B cell (primary cell): ENCODE measurements at regions of chr5 and their contacts with region 1.

Region 1: DNA sequence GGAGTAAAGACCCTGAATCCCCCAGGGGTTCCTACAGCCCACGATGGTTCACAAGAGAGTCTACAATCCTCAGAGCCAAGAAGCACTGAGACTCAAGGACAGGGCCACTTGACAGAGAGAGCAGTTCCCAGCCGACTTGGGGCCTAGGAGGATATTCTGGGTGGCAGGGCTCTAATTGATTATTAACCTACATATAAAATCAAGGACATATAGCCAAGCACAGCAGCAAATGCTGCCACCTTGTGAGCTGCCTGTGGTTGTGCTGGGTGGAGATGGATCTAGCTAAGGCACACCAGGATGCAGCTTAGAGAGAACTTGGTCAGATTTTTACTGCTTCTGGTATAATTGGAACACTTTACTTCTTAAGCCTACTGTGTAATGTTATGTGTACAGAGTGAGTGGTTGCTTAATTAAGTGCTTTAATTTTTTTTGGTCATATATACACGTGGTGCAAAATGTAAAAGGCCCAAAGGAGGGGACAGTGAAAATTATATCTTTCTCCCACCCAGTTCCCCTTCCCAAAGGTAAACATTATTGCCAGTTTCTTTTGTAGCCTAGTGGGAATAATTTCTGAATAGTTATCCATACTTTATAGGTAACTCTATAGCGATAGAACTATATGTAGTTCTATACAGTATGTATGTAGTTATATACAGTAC is 78.8 kb downstream of the F2RL2 start:
- DNase-seq: peak; percentile 45
- ATAC-seq: no peak
- H3K4me3 ChIP-seq: no peak overlapping the region
- H3K4me3 Mint-ChIP-seq: no peak overlapping the region
- H3K27ac ChIP-seq: no peak overlapping the region
- H3K27ac Mint-ChIP-seq: no peak overlapping the region
- H3K4me1 ChIP-seq: peaks cover 41 to 44% of the 10 kb centered on the region in 2 donors
- H3K4me1 Mint-ChIP-seq: peaks cover 51% of the 10 kb centered on the region
- H3K27me3 ChIP-seq: no peaks in the 10 kb centered on the region
- H3K27me3 Mint-ChIP-seq: no peaks in the 10 kb centered on the region
- CTCF ChIP-seq: peak; percentile 37

Region 2: DNA sequence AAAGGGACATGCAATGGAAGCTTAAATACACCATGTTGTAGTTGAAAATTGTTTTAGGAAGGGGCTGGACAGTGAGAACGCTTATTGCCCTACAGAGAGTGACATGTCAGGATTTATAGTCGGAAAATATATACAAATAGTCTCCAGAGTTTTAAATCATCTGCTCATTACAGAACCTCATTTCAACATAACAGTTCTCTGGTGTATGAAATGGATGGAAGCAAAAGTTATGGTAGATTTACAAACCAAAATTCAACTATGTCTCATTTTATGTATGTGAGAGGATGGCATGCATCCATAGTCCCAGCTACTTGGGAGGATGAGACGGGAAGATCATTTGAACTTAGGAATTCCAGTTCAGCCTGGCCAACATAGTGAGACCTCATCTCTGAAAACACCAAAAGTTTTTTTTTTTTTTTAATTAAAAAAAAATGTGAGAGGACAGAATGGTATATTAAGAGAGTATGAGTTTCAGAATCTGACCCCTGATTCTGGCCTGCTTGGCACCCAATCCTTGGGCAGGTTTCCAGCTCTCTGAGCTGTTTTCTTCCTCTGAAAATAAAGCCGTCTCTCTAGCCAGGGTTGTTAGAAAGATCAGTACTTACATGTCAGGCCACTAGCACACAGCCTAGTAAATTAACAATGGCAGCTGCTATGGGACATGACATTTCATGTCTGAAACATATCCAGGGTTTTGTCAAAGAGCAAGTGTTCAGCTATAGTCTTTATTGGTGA is 101.2 kb before region 1 on chr5:
- CTCF ChIA-PET with region 1: no interaction called
- POLR2A ChIA-PET with region 1: no interaction called
- intact Hi-C with region 1: no loop called
- DNase-seq: no peak
- ATAC-seq: no peak
- H3K4me3 ChIP-seq: no peak overlapping the region
- H3K4me3 Mint-ChIP-seq: no peak overlapping the region
- H3K27ac ChIP-seq: no peak overlapping the region
- H3K27ac Mint-ChIP-seq: no peak overlapping the region
- H3K4me1 ChIP-seq: no peaks in the 10 kb centered on the region
- H3K4me1 Mint-ChIP-seq: no peaks in the 10 kb centered on the region
- H3K27me3 ChIP-seq: no peaks in the 10 kb centered on the region
- H3K27me3 Mint-ChIP-seq: no peaks in the 10 kb centered on the region
- CTCF ChIP-seq: no peak

Region 3: DNA sequence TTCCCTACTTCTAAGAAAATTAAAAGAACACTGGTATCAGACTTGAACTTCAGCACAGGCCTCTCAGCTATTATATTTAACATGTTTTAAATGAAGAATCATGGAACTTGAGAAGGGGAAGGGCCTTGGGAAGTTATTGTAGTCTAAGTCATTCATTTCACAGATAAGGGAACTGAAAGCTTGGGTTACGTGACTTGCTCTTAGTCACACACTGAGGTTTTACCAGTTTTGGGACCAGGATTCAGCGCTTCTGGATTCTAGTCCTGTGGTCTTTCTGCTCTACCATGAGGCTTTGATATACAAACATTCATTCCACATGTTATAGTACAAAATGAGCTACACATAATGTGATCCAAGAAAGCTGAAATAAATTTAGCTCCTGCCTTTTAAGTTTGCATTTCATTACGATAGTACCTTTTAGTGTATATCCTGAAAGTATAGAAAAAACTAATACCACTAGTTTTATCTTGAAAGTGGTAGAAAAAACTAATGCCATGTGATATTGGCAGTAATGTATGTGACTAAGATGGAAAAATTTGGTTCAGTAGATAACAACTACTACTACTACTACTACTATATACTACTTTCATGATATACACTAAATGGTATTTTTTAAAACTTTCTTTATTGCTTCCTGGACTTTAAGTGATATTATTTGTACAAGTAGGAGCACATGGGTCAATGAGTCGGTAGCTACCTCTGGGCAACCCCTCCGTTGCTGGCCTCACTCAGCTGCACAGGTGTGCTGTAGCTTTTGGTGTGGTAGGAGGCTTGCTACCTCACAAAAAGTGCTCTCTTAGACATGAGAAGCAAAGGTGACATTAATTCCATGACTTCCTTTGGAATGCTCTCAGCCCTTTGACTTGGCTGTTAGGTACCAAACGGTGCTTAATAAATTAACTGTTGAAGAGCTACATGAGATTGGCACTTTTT is 38.1 kb after region 1 on chr5:
- CTCF ChIA-PET with region 1: interaction called, 11 read pairs
- POLR2A ChIA-PET with region 1: no interaction called
- intact Hi-C with region 1: no loop called
- DNase-seq: peak; percentile 49
- ATAC-seq: peak; percentile 56
- H3K4me3 ChIP-seq: peak overlapping the region in 1 of 5 experiments; percentile 22
- H3K4me3 Mint-ChIP-seq: no peak overlapping the region
- H3K27ac ChIP-seq: no peak overlapping the region
- H3K27ac Mint-ChIP-seq: peak overlapping the region; percentile 46
- H3K4me1 ChIP-seq: peaks cover 4 to 12% of the 10 kb centered on the region in 2 donors
- H3K4me1 Mint-ChIP-seq: peaks cover 18% of the 10 kb centered on the region
- H3K27me3 ChIP-seq: no peaks in the 10 kb centered on the region
- H3K27me3 Mint-ChIP-seq: no peaks in the 10 kb centered on the region
- CTCF ChIP-seq: no peak